Activated naive CD8-positive, alpha-beta T cell treated with anti-CD3 and anti-CD28 coated beads, Interleukin-2, amount 10 ng/mL, durations not matched to agents 7 days and 5 days (primary cell): ENCODE measurements at regions of chr11 and their contacts with region 1.

Region 1: GRCh38 chr11:777288-778255 is at the start of gene GATD1:
- DNase-seq: peak; percentile 99
- ATAC-seq: peak; percentile 88
- H3K4me3 Mint-ChIP-seq: peak within 1 kb of the TSS; percentile 88
- H3K27ac Mint-ChIP-seq: peak within 1 kb of the TSS; percentile 85
- H3K4me1 Mint-ChIP-seq: peaks cover 15% of the 10 kb centered on the region
- H3K27me3 Mint-ChIP-seq: no peaks in the 10 kb centered on the region
- total RNA-seq, gene GATD1: 59.8 to 62.4 TPM

Region 2: DNA sequence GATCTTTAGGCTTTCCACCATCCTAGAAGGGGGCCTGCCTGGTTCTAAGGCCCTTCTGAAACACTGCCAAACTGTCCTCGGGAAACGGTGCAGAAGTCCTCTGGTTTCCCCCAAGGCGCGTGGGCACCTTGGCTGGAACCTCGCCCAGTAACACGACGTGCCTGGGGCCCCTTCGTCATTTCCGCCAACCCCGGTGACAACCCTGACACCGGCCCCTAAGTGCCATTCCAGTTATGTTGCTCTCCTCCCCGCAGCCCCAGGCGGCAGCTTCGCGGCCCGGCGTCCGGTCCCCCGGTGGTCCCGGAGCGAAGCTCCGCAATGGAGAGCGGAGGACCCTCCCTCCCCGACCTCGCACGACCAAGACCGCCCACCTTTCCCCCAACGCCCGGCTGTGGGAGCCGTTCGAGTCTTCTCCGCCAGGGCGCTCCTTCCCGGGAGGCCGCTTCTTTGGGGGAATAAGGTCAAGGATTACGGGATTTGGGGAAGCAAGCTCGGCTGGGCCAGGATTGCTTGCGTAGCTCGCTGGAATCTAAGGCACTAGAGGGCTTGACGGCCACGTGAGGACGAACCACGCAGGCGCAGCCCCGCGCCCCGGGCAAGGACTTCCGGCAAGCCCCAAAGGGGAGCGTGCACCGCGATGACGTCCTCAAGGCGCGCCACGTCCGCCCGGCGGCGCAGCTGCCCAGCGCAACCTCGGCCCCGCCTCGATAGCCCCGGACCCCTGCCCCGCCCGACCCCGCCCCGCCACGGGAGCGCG is 271.2 kb before region 1 on chr11:
- POLR2A ChIA-PET with region 1: no interaction called
- DNase-seq: peak; percentile 98
- ATAC-seq: peak; percentile 83
- H3K4me3 Mint-ChIP-seq: peak overlapping the region; percentile 90
- H3K27ac Mint-ChIP-seq: peak overlapping the region; percentile 99
- H3K4me1 Mint-ChIP-seq: peaks cover 18% of the 10 kb centered on the region
- H3K27me3 Mint-ChIP-seq: no peaks in the 10 kb centered on the region

Region 3: DNA sequence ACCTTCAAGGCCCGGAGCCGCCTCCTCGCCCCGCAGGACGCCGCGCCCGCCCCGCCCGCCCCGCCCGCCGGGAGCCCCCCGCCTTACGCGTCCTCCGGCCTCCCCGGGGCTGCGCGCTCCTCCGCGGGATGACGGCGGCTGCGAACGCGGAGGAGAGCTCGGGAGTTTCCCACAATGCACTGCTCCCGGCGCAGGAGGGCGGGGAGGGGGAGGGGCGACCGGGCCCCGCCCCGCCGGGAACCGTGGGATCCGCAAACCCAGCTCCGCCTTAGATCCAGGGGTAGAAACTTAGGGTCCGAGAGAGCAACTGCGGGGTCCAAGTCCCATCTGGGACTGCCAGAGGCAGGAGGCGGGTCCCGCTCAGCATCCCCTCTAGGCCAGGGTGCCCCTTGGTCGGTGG is 12.4 kb after region 1 on chr11 and contains the start of gene CEND1:
- POLR2A ChIA-PET with region 1: interaction called, 20 read pairs
- DNase-seq: no peak
- ATAC-seq: peak; percentile 16
- H3K4me3 Mint-ChIP-seq: no peak within 1 kb of the TSS
- H3K27ac Mint-ChIP-seq: no peak within 1 kb of the TSS
- H3K4me1 Mint-ChIP-seq: peaks cover 5% of the 10 kb centered on the region
- H3K27me3 Mint-ChIP-seq: no peaks in the 10 kb centered on the region
- total RNA-seq, gene CEND1: 0.37 TPM in 1 of 2 experiments, not detected in the other

Region 4: DNA sequence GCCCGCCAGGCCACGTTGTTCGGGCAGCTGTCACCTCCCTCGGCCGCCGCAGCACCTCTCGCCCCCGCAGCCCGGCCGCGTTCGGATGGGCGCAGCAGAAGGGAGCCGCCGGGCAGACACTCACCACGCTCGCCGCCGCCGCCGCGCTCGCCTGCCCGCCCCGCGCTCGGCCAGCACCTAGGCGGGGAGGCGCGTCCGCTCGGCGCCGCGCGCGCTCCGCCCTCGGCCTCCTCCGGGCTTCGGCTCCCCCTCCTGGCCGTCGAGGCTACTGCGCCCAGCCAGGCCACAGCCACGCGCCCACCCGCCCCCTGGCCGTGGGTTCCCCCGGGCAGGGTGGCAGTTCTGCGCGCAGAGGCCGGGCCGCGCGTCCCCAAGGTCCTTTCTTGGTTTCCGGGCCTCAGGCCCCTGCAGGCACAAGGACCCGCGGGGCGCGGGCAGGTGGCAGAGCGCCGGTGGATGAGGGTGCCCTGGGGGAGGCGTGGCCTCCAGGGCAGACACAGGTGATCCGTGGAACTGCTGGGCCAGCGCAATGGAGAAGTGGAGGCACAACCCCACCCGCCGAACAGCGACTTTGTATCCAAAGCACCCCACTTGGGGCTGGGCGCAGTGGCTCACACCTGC is 20.6 kb after region 1 on chr11 and contains the start of gene SLC25A22:
- POLR2A ChIA-PET with region 1: interaction called, 15 read pairs
- DNase-seq: peak; percentile 96
- ATAC-seq: peak; percentile 48
- H3K4me3 Mint-ChIP-seq: peak within 1 kb of the TSS; percentile 98
- H3K27ac Mint-ChIP-seq: peak within 1 kb of the TSS; percentile 95
- H3K4me1 Mint-ChIP-seq: peaks cover 6% of the 10 kb centered on the region
- H3K27me3 Mint-ChIP-seq: no peaks in the 10 kb centered on the region
- total RNA-seq, gene SLC25A22: 35.1 to 35.8 TPM